ENCODE measurements at regions of chr6 and their contacts with region 1.

Region 1: GRCh38 chr6:34196126-34196830 is 40.4 kb upstream of the HMGA1 start:
- DNase-seq: peak; percentile 90
- H3K4me3 Mint-ChIP-seq: peak overlapping the region; percentile 67
- H3K27ac Mint-ChIP-seq: no peak overlapping the region
- H3K4me1 Mint-ChIP-seq: peaks cover 7% of the 10 kb centered on the region
- H3K27me3 Mint-ChIP-seq: peaks cover 37% of the 10 kb centered on the region

Region 2: DNA sequence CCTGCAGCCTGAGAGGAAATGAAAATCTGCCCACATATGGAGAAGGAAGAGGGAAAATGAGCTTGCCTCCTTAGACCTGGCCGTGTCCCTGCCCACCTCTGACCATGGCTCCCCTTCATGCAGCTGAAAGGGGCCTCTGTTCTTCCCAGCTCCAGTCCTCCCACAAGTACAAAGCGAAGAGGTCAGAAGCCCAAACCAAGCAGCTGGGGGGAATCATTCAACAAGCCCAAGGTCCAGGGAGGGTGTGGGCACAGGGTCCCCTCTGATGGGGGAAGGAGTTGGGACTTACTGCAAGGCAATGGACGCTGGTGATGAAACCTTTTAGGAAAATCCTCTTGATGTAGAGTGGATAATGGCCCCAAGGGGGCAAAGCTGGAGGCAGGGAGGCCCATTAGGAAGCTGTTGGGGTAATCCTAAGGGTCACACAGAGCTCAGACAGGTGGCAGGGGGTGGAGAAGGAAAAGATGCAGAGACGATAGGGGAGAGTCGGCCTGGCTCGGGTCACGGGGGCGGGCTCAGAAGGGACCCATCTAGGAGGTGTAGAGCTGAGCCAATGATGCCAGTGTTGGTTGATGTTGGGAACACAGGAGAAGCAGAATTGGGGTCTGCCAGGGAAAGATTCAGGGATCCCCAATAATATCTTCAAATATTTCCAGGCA is 34.3 kb before region 1 on chr6:
- CTCF ChIA-PET with region 1: interaction called, 27 read pairs
- DNase-seq: peak; percentile 19
- H3K4me3 Mint-ChIP-seq: no peak overlapping the region
- H3K27ac Mint-ChIP-seq: no peak overlapping the region
- H3K4me1 Mint-ChIP-seq: no peaks in the 10 kb centered on the region
- H3K27me3 Mint-ChIP-seq: peaks cover 48% of the 10 kb centered on the region

Region 3: GRCh38 chr6:34236131-34236996 is 40.1 kb after region 1 on chr6 and contains the start of gene HMGA1:
- CTCF ChIA-PET with region 1: interaction called, 10 read pairs
- DNase-seq: peak; percentile 92
- H3K4me3 Mint-ChIP-seq: peak within 1 kb of the TSS; percentile 88
- H3K27ac Mint-ChIP-seq: peak within 1 kb of the TSS; percentile 95
- H3K4me1 Mint-ChIP-seq: peaks cover 39% of the 10 kb centered on the region
- H3K27me3 Mint-ChIP-seq: no peaks in the 10 kb centered on the region

Region 4: DNA sequence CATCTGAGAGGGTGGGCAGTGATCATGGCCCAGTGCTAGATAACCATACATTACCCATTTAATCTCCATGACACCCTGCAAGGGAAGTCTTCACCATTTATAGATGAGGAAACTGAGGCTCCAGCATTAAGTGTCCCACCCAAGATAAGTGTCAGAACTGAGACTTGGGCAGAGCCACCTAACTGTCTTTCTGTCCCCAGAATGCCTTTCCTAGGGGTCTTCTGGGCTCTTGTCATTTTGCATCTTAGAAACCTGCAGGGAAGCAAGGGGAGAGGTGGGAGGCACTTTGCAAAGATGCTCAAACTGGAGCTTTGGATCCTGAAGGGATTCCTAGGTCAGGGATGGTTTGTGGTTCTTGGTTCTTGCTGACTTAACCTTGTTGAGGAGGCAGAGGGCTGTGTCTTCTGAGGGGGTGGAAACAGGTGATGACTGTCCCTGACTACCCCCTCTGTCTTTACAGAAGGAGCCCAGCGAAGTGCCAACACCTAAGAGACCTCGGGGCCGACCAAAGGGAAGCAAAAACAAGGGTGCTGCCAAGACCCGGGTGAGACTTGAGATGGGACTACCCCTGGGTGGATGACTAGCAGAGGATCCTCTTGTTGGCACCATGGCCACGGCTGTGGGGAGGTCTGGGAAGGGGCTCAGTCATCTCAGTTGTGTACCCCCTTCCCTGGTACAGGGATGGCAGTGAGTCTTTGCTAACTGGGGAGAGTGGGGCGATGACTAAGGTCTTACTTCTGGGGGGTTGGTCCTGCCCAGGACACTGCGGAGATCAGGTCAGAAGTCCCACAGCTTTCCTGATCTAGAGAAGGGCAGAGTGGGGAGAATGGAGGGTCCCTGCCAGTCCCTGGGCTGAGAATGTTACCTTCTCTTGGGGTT is 46.2 kb after region 1 on chr6:
- CTCF ChIA-PET with region 1: interaction called, 32 read pairs
- DNase-seq: no peak
- H3K4me3 Mint-ChIP-seq: no peak overlapping the region
- H3K27ac Mint-ChIP-seq: peak overlapping the region; percentile 82
- H3K4me1 Mint-ChIP-seq: peaks cover 83% of the 10 kb centered on the region
- H3K27me3 Mint-ChIP-seq: no peaks in the 10 kb centered on the region

Region 5: DNA sequence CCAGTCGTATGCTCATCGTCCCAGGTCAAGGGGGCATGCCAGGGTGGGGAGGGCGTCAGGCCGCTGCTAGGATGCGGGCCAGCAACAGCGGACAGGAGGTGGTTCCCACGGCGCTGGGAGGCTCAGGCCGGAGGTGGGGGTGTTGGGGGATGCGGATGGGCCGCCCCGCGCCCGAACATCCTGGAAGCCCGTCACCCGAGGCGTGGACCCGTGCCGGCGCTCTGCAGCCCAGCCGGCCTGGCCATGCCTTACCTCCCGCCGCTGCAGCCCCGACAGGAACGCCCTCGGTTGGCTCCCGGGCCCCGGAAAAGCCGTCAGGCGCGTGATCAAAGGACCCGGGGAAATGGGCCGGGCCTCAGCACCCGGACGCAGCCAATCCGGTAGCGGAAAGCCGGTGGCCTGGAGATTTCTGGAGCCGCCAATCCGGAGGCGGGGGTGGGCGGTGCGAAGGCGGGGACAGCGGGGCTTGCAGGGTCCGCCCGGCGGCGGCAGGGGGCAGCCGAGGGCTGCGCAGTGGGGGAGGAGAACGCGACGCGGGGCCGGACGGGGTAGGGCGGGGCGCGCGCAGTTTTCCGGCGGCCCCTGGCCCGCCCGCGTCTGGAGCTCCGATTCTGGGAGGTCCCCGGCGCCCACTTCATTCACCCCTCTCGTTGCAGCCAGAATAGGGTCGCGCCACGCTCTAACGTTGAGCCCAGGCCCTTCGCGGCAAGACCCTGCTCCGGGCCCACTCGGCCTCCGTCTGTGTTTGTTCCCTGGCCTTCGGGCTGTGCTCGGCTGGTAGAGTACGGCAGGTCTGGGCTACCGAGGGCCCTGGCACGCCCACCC is 52.7 kb after region 1 on chr6 and contains the start of gene SMIM29:
- CTCF ChIA-PET with region 1: interaction called, 32 read pairs
- DNase-seq: peak; percentile 98
- H3K4me3 Mint-ChIP-seq: peak within 1 kb of the TSS; percentile 96
- H3K27ac Mint-ChIP-seq: peak within 1 kb of the TSS; percentile 96
- H3K4me1 Mint-ChIP-seq: peaks cover 51% of the 10 kb centered on the region
- H3K27me3 Mint-ChIP-seq: peaks cover 6% of the 10 kb centered on the region

Region 6: DNA sequence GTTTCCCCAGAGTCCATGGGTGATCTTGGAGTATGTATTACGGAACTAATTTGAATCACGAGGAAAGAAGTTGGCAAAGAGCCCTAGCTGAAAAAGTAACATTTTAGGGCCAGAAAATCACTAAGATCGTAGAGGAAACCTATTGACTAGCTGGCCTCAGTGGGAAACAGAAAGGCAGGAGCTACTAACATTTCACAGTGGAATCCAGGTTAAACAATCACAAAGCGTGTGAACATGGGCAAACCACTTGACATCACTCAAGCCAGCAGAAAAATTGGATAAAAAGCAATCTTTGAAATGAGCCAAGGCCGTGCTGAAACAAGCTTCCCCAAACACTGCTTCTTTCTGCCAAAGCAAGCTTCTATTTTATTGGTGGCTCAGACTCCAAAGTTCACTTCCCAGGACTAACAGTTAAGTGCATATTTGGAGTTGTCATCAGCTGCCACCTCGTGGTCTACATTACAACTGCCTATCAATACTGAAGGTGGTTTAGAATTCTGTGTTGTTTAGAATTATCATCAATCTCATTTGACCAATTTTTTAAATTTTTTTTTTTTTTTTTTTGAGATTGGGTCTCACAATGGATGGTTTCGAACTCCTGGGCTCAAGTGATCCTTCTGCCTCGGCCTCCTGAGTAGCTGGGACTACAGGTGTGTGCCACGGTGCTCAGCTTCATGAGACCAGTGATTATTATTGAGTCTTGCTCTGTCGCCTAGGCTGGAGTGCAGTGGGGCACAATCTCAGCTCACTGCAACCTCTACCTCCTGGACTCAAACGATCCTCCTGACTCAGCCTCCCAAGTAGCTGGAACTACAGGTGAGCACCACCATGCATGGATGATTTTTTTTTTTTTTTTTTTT is 219.0 kb after region 1 on chr6:
- CTCF ChIA-PET with region 1: interaction called, 34 read pairs
- DNase-seq: peak; percentile 63
- H3K4me3 Mint-ChIP-seq: no peak overlapping the region
- H3K27ac Mint-ChIP-seq: no peak overlapping the region
- H3K4me1 Mint-ChIP-seq: peaks cover 11% of the 10 kb centered on the region
- H3K27me3 Mint-ChIP-seq: no peaks in the 10 kb centered on the region

Region 7: GRCh38 chr6:34610819-34611477 is 414.7 kb after region 1 on chr6:
- CTCF ChIA-PET with region 1: interaction called, 16 read pairs
- DNase-seq: no peak
- H3K4me3 Mint-ChIP-seq: no peak overlapping the region
- H3K27ac Mint-ChIP-seq: no peak overlapping the region
- H3K4me1 Mint-ChIP-seq: peaks cover 6% of the 10 kb centered on the region
- H3K27me3 Mint-ChIP-seq: no peaks in the 10 kb centered on the region

Region 8: GRCh38 chr6:35146453-35146852 is 950.2 kb after region 1 on chr6:
- CTCF ChIA-PET with region 1: no interaction called
- DNase-seq: peak; percentile 46
- H3K4me3 Mint-ChIP-seq: no peak overlapping the region
- H3K27ac Mint-ChIP-seq: no peak overlapping the region
- H3K4me1 Mint-ChIP-seq: peaks cover 34% of the 10 kb centered on the region
- H3K27me3 Mint-ChIP-seq: peaks cover 23% of the 10 kb centered on the region